Heart right ventricle (tissue), 16 donors: ENCODE measurements at regions of chr14 and their contacts with region 1.

Region 1: GRCh38 chr14:76151398-76152339 is at the start of gene GPATCH2L:
- DNase-seq: peak; percentile 96
- ATAC-seq: peak; percentile 100
- H3K4me3 ChIP-seq: peak within 1 kb of the TSS; percentile 90 to 100 (median 98)
- H3K27ac ChIP-seq: peak within 1 kb of the TSS in 9 of 10 donors; percentile 78 to 96 (median 88)
- H3K4me1 ChIP-seq: peaks cover 3 to 48% (median 43%) of the 10 kb centered on the region in 9 donors
- H3K27me3 ChIP-seq: no peaks in the 10 kb centered on the region
- CTCF ChIP-seq: no peak
- total RNA-seq, gene GPATCH2L: 20.1 to 27.9 (median 25.1) TPM

Region 2: DNA sequence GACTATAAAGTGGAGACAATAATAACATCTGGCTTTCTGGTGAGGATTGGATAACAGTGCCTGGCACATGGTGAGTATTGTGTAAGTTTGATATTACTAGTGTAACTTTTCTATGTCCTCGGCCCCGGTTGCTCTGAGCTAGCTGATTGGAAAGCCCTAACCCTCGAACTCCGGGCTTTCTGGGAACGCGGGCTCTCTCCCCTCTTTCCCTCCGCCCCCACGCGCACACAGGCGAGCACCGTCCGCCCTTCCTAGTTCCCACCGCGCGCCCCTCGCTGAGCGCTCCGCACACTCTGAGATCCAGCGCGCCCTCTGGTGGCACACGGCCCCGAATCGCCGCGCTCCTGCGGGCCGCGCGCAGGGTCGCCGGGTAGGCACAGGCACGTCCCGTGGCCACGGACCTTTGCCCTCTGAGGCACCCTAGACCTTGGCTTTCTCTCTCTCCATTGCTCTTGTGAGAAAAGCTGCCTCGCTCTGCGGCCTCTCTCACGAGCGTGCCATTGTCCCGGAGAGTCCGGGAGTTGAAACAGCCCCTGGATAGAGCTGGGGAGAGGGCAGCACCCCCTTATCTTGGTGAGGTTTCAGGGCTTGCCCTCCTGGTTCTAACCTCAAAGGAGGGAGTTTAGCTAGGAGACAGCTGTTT is 201.1 kb after region 1 on chr14:
- intact Hi-C with region 1: loop called in 1 of 10 experiments (anchors 5 kb)
- DNase-seq: peak; percentile 56 to 68
- ATAC-seq: peak; percentile 70 to 84 (median 76)
- H3K4me3 ChIP-seq: peak overlapping the region in 8 of 10 donors; percentile 9 to 40 (median 28)
- H3K27ac ChIP-seq: no peak overlapping the region
- H3K4me1 ChIP-seq: peaks cover 0 to 30% (median 14%) of the 10 kb centered on the region in 9 donors
- H3K27me3 ChIP-seq: peaks cover 0 to 14% (median 4%) of the 10 kb centered on the region in 7 donors
- CTCF ChIP-seq: peak; percentile 79 to 95 (median 90)

Region 3: DNA sequence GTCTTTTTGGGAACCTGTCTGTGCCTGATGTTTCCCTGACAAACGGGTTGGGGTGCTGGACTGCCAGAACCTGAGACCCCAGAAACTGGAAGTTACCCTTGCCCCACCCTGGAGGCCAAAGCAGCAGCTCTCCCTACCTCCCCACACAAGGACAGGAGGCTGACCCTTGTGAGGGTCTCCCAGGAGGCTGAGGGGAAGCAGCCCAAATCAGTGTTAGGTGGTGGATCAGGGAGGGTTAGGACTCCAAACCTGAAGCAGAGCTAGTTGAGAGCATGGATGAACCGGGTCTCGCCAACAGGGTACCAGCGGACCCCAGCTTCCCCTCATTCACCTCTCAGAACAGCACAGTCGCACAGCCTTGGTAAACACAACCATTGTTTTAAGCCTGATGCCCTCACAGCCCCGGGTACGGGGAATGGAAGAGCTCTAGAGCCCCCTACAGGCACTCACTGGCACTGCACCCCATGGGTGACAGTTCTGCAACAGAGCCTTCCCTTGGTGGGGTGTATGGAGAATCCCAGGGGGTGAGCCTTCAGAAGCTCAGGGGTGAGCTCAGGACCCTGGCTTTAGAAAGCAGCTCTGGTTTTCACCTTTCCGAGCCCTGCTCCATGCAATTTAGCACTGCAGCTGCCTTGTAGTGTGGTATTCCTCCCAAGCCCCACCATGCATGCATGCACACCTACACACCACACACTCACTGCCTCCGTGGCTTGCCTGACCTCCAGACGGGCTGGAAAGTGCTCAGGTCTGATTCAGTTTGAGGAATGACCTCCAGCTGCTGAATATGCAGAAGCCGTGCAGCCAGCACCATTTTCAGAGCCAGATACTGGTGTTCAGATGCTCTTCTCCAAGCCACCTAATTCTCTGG is 235.5 kb after region 1 on chr14:
- intact Hi-C with region 1: no loop called
- DNase-seq: peak; percentile 63 to 64
- ATAC-seq: peak; percentile 51 to 90 (median 86)
- H3K4me3 ChIP-seq: no peak overlapping the region
- H3K27ac ChIP-seq: no peak overlapping the region
- H3K4me1 ChIP-seq: peaks cover 0 to 7% (median 0%) of the 10 kb centered on the region in 9 donors
- H3K27me3 ChIP-seq: peaks cover 0 to 47% (median 19%) of the 10 kb centered on the region in 7 donors
- CTCF ChIP-seq: peak; percentile 89 to 98 (median 96)